Spleen (tissue), 13 donors: ENCODE measurements at regions of chr12 and their contacts with region 1.

Region 1: GRCh38 chr12:67433385-67434175 is 164.4 kb downstream of the CAND1 start:
- DNase-seq: no peak
- H3K4me3 ChIP-seq: no peak overlapping the region
- H3K27ac ChIP-seq: peak overlapping the region in 2 of 8 donors; percentile 6 to 19
- H3K4me1 ChIP-seq: peaks cover 0 to 18% (median 10%) of the 10 kb centered on the region in 6 donors
- H3K27me3 ChIP-seq: no peaks in the 10 kb centered on the region
- CTCF ChIP-seq: no peak
- POLR2A ChIP-seq: no peak

Region 2: DNA sequence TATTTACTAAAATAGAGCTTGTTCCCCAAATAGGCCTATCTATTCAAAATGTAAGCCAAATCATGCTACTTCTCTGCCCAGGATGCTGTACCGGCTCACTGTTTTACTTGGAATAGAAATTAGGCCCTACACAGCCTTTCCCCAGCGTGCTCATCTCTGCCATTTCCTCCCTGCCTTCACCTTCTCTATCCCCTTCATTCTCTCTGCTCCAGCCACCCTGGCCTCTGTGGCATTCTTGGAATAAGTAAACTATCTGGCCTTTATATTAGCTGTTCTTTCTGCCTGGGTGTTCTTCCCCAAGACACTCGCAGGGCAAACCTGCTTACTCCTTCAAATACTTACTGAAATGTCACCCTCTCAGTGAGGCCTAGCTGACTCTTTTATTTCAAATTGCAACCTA is 184.0 kb after region 1 on chr12:
- intact Hi-C with region 1: no loop called
- DNase-seq: no peak
- H3K4me3 ChIP-seq: no peak overlapping the region
- H3K27ac ChIP-seq: no peak overlapping the region
- H3K4me1 ChIP-seq: peaks cover 0 to 18% (median 9%) of the 10 kb centered on the region in 6 donors
- H3K27me3 ChIP-seq: no peaks in the 10 kb centered on the region
- CTCF ChIP-seq: no peak
- POLR2A ChIP-seq: no peak

Region 3: GRCh38 chr12:67649570-67650387 is 216.2 kb after region 1 on chr12:
- intact Hi-C with region 1: loop called (anchors 10 kb)
- DNase-seq: peak; percentile 89
- H3K4me3 ChIP-seq: peak overlapping the region; percentile 85 to 99 (median 90)
- H3K27ac ChIP-seq: peak overlapping the region; percentile 85 to 97 (median 96)
- H3K4me1 ChIP-seq: peaks cover 21 to 71% (median 50%) of the 10 kb centered on the region in 6 donors
- H3K27me3 ChIP-seq: no peaks in the 10 kb centered on the region
- CTCF ChIP-seq: no peak
- POLR2A ChIP-seq: no peak

Region 4: DNA sequence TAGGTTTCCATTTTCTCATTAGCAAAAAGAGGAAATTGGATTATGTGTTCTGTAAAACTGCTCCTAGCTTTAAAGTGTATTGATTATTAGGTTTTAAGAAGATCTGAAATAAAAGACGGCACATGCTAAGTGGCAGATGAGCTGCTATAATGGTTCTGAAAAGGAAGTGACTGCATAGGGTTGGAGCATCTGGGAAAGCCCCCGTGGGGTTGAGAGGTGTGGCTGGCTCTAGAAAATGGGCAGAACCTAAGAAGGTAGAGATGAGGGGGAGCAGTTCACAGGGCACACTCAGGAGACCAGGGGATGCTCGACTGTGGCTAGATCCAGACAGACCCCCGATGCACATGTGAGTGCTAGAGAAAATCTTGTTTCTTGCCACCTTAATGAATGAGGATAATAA is 557.6 kb after region 1 on chr12:
- intact Hi-C with region 1: no loop called
- DNase-seq: peak; percentile 75
- H3K4me3 ChIP-seq: peak overlapping the region in 2 of 8 donors; percentile 28 to 60
- H3K27ac ChIP-seq: peak overlapping the region in 6 of 8 donors; percentile 50 to 82 (median 63)
- H3K4me1 ChIP-seq: peaks cover 0 to 52% (median 17%) of the 10 kb centered on the region in 6 donors
- H3K27me3 ChIP-seq: no peaks in the 10 kb centered on the region
- CTCF ChIP-seq: no peak
- POLR2A ChIP-seq: no peak

Region 5: GRCh38 chr12:69405466-69405865 is 1971.9 kb after region 1 on chr12:
- intact Hi-C with region 1: no loop called
- DNase-seq: no peak
- H3K4me3 ChIP-seq: no peak overlapping the region
- H3K27ac ChIP-seq: no peak overlapping the region
- H3K4me1 ChIP-seq: no peaks in the 10 kb centered on the region
- H3K27me3 ChIP-seq: no peaks in the 10 kb centered on the region
- CTCF ChIP-seq: no peak
- POLR2A ChIP-seq: no peak